K562 (cell line): ENCODE measurements at regions of chr2 and their contacts with region 1.

Region 1: DNA sequence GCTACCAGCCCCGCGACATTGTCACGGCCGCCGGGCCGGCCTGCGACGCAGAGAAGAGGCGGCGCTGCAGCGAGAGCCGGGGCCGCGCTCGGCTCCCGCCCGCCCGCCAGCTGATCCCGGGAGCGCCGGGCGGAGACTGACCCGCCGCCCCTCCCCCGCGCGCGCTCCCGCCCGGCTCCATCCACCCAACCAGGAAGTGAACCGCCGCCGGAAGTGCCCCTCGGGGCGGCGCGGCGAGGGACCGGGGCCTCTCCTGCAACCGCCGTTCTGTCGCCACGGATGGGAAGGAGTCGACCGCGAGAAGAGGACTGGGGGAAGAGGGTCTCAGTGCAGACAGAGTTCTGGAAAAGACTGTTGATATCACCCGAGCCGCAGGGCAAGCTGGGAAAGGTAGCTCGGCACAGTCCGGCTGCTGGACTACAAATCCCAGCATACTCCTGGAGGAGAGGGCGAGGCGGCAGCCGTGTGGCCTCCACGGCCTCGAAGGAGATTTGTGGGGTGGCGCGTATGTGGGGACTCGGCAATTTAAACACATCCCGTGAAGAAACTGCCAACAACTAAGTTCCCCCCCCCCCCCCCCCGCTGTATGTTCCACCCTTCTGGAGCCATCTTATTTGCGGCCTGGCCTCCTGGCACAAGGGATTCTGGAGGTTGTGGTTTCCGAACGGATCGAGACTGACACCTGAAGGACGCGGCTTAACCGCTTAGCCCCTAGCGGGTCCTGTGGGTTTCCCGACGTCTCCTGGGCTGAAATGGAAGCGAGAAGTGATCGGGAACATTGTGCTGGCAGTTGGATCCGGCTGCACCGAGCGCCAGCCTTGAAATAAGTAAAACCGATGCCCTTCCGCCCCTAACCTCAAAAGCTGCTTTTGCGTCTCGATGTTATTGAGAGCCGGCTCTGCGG is at the start of gene AAK1:
- DNase-seq: peak; percentile 92 to 93 (median 93)
- ATAC-seq: peak; percentile 85
- H3K4me3 ChIP-seq: peak within 1 kb of the TSS; percentile 79
- H3K27ac ChIP-seq: peak within 1 kb of the TSS; percentile 99
- H3K4me1 ChIP-seq: peaks cover 15 to 32% of the 10 kb centered on the region in 2 experiments; a peak in 4 of 5 replicates
- H3K27me3 ChIP-seq: no peaks in the 10 kb centered on the region
- CTCF ChIP-seq: no peak; a peak in 1 of 6 replicates
- EP300 ChIP-seq: no peak; the same call in 1 of the 2 replicates
- POLR2A ChIP-seq: peak; percentile 88
- RAD21 ChIP-seq: no peak; a peak in 1 of 4 replicates
- polyA plus RNA-seq, gene AAK1: 0.89 to 2.4 TPM

Region 2: GRCh38 chr2:69565431-69565839 is 78.4 kb before region 1 on chr2:
- CTCF ChIA-PET with region 1: no interaction called
- POLR2A ChIA-PET with region 1: interaction called, 3 read pairs
- in situ Hi-C with region 1: no loop called
- intact Hi-C with region 1: loop called (anchors 5 kb)
- DNase-seq: peak; percentile 78 to 83 (median 81)
- ATAC-seq: peak; percentile 97
- H3K4me3 ChIP-seq: no peak overlapping the region
- H3K27ac ChIP-seq: no peak overlapping the region
- H3K4me1 ChIP-seq: no peaks in the 10 kb centered on the region; a peak in 2 of 5 replicates
- H3K27me3 ChIP-seq: no peaks in the 10 kb centered on the region
- CTCF ChIP-seq: peak; percentile 81 to 94 (median 83)
- EP300 ChIP-seq: no peak
- POLR2A ChIP-seq: no peak
- RAD21 ChIP-seq: peak; percentile 38 to 61; a peak in 3 of 4 replicates

Region 3: DNA sequence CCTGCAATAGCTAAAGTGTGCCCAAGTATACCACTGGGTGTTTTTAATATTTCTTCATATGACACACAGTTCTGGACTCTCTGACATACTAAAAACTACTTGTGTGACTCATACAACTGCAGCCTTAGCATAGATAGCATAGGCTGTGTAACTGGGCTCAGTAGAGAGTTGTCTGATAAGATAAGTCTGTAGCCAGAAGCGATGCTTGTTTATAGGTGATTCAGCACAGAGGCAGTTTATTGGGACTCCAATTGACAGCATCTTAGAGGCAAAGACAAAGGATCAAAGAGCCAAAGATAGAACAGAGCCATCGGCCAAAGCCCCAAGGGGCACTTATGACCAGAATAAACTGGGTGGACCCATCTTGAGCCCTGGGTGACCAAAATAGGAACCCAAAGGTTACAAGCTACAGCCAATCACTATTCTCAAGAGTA is 42.7 kb before region 1 on chr2:
- CTCF ChIA-PET with region 1: no interaction called
- POLR2A ChIA-PET with region 1: interaction called, 15 read pairs
- in situ Hi-C with region 1: no loop called
- intact Hi-C with region 1: loop called (anchors 5 kb)
- DNase-seq: peak; percentile 80 to 87 (median 84)
- ATAC-seq: peak; percentile 90
- H3K4me3 ChIP-seq: no peak overlapping the region
- H3K27ac ChIP-seq: peak overlapping the region; percentile 75
- H3K4me1 ChIP-seq: peaks cover 6 to 51% of the 10 kb centered on the region in 2 experiments
- H3K27me3 ChIP-seq: no peaks in the 10 kb centered on the region
- CTCF ChIP-seq: no peak
- EP300 ChIP-seq: peak; percentile 92
- POLR2A ChIP-seq: no peak
- RAD21 ChIP-seq: no peak; a peak in 1 of 4 replicates

Region 4: DNA sequence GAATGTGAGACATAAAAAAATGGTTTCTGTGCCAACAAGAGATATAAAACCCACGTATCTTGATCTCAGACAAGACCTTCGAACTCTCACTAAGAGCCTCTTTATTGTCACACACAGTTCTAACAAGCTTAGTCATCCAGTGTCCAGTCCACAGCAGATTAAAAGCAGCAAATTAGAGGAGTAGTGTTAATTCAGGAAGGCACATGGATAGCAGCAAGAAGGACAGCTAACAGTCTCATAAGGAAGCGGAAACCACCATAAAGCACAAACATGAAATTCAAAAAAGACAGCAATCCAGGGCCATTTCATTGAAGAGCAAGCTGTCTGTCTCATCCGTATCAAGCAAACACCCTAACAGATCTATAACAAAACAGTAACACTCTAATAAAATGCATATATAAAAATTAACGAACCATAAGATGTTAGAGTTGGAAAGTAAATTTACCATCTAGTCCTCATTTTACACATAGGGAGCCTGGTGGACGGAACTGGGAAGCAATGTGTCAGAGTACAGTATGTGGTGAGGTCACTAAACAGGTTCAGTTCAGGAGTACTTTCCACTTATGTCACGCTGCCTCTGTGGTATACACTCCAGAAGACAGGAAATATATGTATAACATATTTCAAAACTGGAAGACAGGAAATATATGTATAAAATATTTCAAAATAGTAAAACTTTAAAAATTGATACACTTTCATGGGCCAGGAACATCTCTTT is 18.6 kb before region 1 on chr2:
- CTCF ChIA-PET with region 1: no interaction called
- POLR2A ChIA-PET with region 1: interaction called, 70 read pairs
- in situ Hi-C with region 1: no loop called
- intact Hi-C with region 1: no loop called
- DNase-seq: peak in 3 of 4 experiments; percentile 32 to 67 (median 65)
- ATAC-seq: peak; percentile 80
- H3K4me3 ChIP-seq: no peak overlapping the region
- H3K27ac ChIP-seq: peak overlapping the region; percentile 71
- H3K4me1 ChIP-seq: peaks cover 0 to 35% of the 10 kb centered on the region in 2 experiments; a peak in 4 of 5 replicates
- H3K27me3 ChIP-seq: no peaks in the 10 kb centered on the region
- CTCF ChIP-seq: no peak
- EP300 ChIP-seq: no peak; the same call in 1 of the 2 replicates
- POLR2A ChIP-seq: no peak
- RAD21 ChIP-seq: 0 out of 4 replicates have a peak, but pooled peaks of 1 of the 2 experiments have one; percentile 6

Region 5: DNA sequence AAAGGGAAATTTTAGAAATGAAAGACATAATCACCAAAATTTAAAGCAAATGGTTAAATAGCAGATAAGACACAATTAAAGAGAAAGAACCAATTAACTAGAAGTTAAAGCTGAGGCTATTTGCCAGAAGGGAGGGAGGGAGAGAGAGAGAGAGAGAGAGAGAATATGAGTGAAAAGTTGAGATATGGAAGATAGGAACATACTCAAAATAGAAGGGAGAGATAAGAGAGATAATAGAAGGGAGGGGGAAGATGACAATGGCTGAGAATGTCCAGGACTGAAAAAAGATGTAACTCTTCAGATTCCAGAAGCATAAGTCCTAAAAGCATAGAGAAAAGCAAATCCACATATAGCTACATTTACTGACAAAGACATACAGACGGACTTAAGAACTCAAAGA is 16.8 kb after region 1 on chr2:
- CTCF ChIA-PET with region 1: no interaction called
- POLR2A ChIA-PET with region 1: interaction called, 12 read pairs
- in situ Hi-C with region 1: no loop called
- intact Hi-C with region 1: no loop called
- DNase-seq: no peak
- ATAC-seq: no peak
- H3K4me3 ChIP-seq: no peak overlapping the region
- H3K27ac ChIP-seq: no peak overlapping the region
- H3K4me1 ChIP-seq: peaks cover 0 to 3% of the 10 kb centered on the region in 2 experiments; a peak in 2 of 5 replicates
- H3K27me3 ChIP-seq: no peaks in the 10 kb centered on the region
- CTCF ChIP-seq: no peak
- EP300 ChIP-seq: no peak
- POLR2A ChIP-seq: no peak
- RAD21 ChIP-seq: no peak

Region 6: GRCh38 chr2:69683101-69683971 is 39.5 kb after region 1 on chr2:
- CTCF ChIA-PET with region 1: no interaction called
- POLR2A ChIA-PET with region 1: no interaction called
- in situ Hi-C with region 1: no loop called
- intact Hi-C with region 1: loop called (anchors 5 kb)
- DNase-seq: peak; percentile 38 to 66 (median 40)
- ATAC-seq: peak; percentile 75
- H3K4me3 ChIP-seq: no peak overlapping the region
- H3K27ac ChIP-seq: peak overlapping the region; percentile 67; the same call in 2 of the 3 replicates
- H3K4me1 ChIP-seq: peaks cover 0 to 23% of the 10 kb centered on the region in 2 experiments; a peak in 3 of 5 replicates
- H3K27me3 ChIP-seq: no peaks in the 10 kb centered on the region
- CTCF ChIP-seq: no peak
- EP300 ChIP-seq: peak; percentile 86
- POLR2A ChIP-seq: no peak
- RAD21 ChIP-seq: no peak

Region 7: DNA sequence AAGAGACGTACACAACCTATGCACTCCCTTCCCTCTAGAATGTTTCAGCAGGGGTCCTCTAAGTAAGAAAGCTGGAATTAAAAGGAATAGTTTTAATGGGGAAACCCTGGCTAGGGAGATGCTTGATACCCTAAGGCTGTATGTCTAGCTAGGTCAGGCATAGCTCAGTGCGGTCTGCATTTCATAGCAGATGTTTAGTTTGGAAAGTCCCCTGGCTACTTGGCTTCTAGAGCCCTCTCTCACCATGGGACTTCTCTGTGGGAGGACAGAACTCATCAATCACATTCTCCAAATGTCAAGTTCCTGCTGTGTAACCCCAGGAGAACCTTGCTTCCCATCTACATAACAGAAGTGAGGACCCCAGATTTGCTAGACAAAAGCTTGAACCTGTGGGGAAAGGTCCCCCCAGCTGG is 74.0 kb after region 1 on chr2:
- CTCF ChIA-PET with region 1: no interaction called
- POLR2A ChIA-PET with region 1: interaction called, 3 read pairs
- in situ Hi-C with region 1: no loop called
- intact Hi-C with region 1: loop called (anchors 2 kb)
- DNase-seq: no peak
- ATAC-seq: no peak
- H3K4me3 ChIP-seq: no peak overlapping the region
- H3K27ac ChIP-seq: no peak overlapping the region
- H3K4me1 ChIP-seq: peaks cover 0 to 8% of the 10 kb centered on the region in 2 experiments; a peak in 2 of 5 replicates
- H3K27me3 ChIP-seq: no peaks in the 10 kb centered on the region
- CTCF ChIP-seq: no peak
- EP300 ChIP-seq: no peak
- POLR2A ChIP-seq: no peak
- RAD21 ChIP-seq: no peak

Region 8: GRCh38 chr2:69750246-69750645 is 106.4 kb after region 1 on chr2:
- CTCF ChIA-PET with region 1: no interaction called
- POLR2A ChIA-PET with region 1: no interaction called
- in situ Hi-C with region 1: no loop called
- intact Hi-C with region 1: no loop called
- DNase-seq: no peak
- ATAC-seq: no peak
- H3K4me3 ChIP-seq: no peak overlapping the region
- H3K27ac ChIP-seq: no peak overlapping the region
- H3K4me1 ChIP-seq: no peaks in the 10 kb centered on the region; a peak in 2 of 5 replicates
- H3K27me3 ChIP-seq: no peaks in the 10 kb centered on the region
- CTCF ChIP-seq: no peak
- EP300 ChIP-seq: no peak
- POLR2A ChIP-seq: no peak
- RAD21 ChIP-seq: no peak

Region 9: DNA sequence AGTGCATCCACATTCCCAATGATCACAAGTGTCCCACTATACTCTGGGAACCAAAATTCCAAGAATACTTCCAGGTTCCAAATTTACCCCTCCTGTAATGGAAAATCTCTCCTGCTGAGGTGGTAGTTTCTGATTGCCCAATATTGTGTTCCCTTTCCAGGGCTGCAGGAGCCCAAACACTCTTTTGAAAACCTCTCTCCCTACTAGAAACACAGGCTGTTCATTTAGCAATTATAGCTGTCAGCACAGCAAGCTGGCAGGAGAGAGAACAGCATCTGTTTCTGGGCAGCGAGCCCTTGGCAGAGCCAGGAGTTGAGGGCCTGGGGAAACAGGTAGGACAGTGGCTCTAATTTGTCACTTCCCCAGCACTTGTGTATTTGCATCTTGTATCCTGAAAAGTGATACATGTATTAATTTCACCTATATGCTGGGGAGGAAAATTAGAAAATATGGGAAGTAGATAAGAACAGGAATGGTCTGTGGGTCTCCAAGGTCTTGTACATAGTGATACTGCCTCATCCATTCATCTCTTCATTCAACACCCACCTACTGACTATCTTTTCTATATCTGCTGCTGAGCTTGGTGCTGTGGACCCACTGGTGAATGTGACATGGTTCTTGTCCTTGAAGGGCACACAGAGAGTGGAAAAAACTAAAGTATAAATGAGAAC is 1599.9 kb after region 1 on chr2:
- CTCF ChIA-PET with region 1: no interaction called
- POLR2A ChIA-PET with region 1: no interaction called
- in situ Hi-C with region 1: no loop called
- intact Hi-C with region 1: no loop called
- DNase-seq: no peak
- ATAC-seq: no peak
- H3K4me3 ChIP-seq: no peak overlapping the region
- H3K27ac ChIP-seq: no peak overlapping the region
- H3K4me1 ChIP-seq: no peaks in the 10 kb centered on the region
- H3K27me3 ChIP-seq: peaks cover 0 to 6% of the 10 kb centered on the region in 2 experiments; a peak in 2 of 5 replicates
- CTCF ChIP-seq: no peak
- EP300 ChIP-seq: no peak
- POLR2A ChIP-seq: no peak
- RAD21 ChIP-seq: no peak